ENCODE measurements at regions of chr11 and their contacts with region 1.

Region 1: GRCh38 chr11:13983081-13983751 is 20.7 kb downstream of the SPON1 start:
- DNase-seq: no peak
- ATAC-seq: peak; percentile 73

Region 2: DNA sequence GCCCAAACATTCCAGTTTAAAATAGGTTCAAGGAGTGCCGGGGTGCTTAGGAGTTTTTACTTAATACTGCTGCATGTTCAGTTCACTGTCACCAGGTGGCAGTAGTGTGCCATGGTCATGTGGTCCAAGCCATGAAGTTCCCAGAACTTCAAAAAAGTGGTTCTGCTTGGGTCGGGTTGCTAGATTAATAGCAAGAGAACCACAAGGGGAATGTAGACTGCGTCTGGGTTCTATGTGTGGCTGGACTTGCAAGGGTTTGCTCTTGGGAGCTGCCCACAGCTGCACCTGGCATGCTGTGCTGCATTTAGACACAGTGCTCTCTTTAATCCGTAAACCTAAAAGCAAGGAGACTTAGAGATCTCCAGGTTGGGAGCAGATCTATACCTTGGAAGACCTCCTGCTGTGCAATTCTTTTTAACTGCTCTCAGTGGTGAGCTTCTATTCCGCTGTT is 27.2 kb before region 1 on chr11:
- intact Hi-C with region 1: no loop called
- DNase-seq: no peak
- ATAC-seq: peak; percentile 50

Region 3: DNA sequence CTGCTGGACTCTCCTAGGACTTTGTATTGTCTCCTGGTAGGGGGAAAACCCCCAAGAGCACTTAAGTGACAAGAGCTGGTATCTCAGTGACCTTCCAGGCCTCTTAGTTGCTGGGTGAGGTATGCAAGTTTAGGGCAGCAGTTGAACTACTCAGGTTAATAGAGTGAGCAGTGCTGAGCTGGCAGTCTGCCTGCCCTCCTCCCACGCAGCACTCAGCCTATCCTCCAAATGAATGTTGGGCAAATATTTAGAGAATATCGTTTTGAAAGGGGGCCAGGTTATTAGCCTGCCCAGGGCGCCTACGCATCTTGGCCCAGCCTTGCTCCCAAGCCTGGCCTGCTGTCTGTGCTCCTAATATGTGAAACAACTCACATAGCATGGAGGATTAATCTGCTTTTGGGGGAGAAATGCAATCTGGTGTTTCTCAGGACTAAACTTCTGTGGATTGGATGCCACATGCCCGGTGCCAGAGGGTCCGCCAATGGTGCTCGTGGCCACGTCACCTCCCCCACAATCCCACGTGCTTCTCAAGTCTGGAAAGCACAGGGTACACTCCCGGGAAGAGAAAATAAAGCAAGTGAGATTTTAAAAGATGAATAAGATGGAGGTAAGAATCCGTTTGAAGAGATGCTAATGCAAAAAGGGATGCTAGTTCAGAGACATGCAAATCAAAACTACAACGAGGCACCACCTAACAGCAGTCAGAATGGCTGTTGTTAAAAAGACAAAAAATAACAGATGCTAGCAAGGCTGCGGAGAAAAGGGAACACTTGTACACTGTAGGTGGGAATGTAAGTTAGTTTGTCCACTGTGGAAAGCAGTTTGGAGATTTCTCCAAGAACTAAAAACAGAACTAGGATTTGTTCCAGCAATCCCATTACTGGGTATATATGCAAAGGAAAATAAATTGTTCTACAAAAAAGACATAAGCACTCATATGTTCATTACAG is 47.0 kb after region 1 on chr11:
- intact Hi-C with region 1: loop called (anchors 5 kb)
- DNase-seq: peak; percentile 72
- ATAC-seq: peak; percentile 79

Region 4: DNA sequence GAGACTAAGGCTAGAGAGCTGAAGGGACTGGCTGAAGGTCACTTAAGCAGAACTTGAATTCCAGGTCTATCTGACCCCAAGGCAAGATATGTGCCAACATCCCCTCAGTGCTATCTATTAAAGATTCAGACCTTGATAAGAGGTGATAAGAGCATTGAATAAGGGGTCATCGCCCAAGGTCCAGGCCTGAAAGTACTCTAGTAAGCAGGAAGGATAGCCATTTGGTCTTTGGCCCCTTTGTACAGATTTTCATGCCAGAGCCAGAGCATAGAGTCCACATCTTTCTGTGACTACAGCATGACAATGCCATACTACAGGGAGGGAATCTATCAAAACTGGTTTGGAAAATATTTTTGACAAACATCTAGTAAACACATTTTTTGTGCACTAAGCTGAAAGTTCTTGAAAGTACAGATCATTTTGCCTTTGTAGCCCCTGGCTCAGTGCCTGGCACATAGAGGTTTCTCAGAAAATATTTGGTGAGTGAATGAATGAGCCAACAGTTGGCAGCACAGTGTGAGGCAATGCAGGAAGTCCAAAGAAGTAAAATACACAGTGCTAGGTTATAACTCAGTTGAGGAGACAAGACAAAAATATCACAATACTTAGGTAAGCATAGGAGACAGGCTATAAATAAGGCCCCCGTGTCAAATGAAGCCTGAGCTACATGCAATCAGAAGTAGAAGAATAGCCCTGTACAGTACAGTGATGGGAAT is 390.9 kb after region 1 on chr11:
- intact Hi-C with region 1: no loop called
- DNase-seq: no peak
- ATAC-seq: peak; percentile 72

Measured in Right ventricle myocardium inferior (tissue), 1 donor.